Activated T-helper 1 cell treated with anti-CD3 and anti-CD28 coated beads, Interleukin-12 subunit alpha, Interleukin-12 subunit beta, Interleukin-2, Interleukin-4 antibody, amounts not matched to agents 30 ng/mL and 10 ng/mL and 1 ng/mL, durations not matched to agents 14 hours and 24 hours and 36 hours (primary cell): ENCODE measurements at regions of chr1 and their contacts with region 1.

Region 1: GRCh38 chr1:241895013-241895412 is 47.0 kb downstream of the EXO1 start:
- DNase-seq: no peak
- H3K4me3 Mint-ChIP-seq: no peak overlapping the region
- H3K27ac Mint-ChIP-seq: no peak overlapping the region
- H3K4me1 Mint-ChIP-seq: no peaks in the 10 kb centered on the region
- H3K27me3 Mint-ChIP-seq: no peaks in the 10 kb centered on the region

Region 2: GRCh38 chr1:241883159-241883558 is 11.9 kb before region 1 on chr1:
- intact Hi-C with region 1: loop called (anchors 2 kb)
- DNase-seq: no peak
- H3K4me3 Mint-ChIP-seq: no peak overlapping the region
- H3K27ac Mint-ChIP-seq: no peak overlapping the region
- H3K4me1 Mint-ChIP-seq: peaks cover 22% of the 10 kb centered on the region
- H3K27me3 Mint-ChIP-seq: no peaks in the 10 kb centered on the region

Region 3: GRCh38 chr1:241998412-241998921 is 103.5 kb after region 1 on chr1:
- intact Hi-C with region 1: loop called (anchors 1 kb)
- DNase-seq: peak; percentile 23
- H3K4me3 Mint-ChIP-seq: peak overlapping the region; percentile 48
- H3K27ac Mint-ChIP-seq: no peak overlapping the region
- H3K4me1 Mint-ChIP-seq: peaks cover 4% of the 10 kb centered on the region
- H3K27me3 Mint-ChIP-seq: peaks cover 1% of the 10 kb centered on the region

Region 4: GRCh38 chr1:242017584-242018233 is 122.7 kb after region 1 on chr1:
- intact Hi-C with region 1: loop called (anchors 1 kb)
- DNase-seq: no peak
- H3K4me3 Mint-ChIP-seq: no peak overlapping the region
- H3K27ac Mint-ChIP-seq: no peak overlapping the region
- H3K4me1 Mint-ChIP-seq: no peaks in the 10 kb centered on the region
- H3K27me3 Mint-ChIP-seq: peaks cover 1% of the 10 kb centered on the region